GM23248 (cell line): ENCODE measurements at regions of chr12 and their contacts with region 1.

Region 1: GRCh38 chr12:14167005-14167628 is 185.7 kb upstream of the GRIN2B start:
- DNase-seq: peak; percentile 60
- H3K4me3 ChIP-seq: no peak overlapping the region
- H3K27ac ChIP-seq: no peak overlapping the region
- H3K4me1 ChIP-seq: no peaks in the 10 kb centered on the region
- H3K27me3 ChIP-seq: no peaks in the 10 kb centered on the region

Region 2: GRCh38 chr12:13864081-13864673 is 302.9 kb before region 1 on chr12:
- in situ Hi-C with region 1: loop called (anchors 10 kb)
- DNase-seq: peak; percentile 81
- H3K4me3 ChIP-seq: no peak overlapping the region
- H3K27ac ChIP-seq: no peak overlapping the region
- H3K4me1 ChIP-seq: no peaks in the 10 kb centered on the region
- H3K27me3 ChIP-seq: peaks cover 10% of the 10 kb centered on the region; the same call in 1 of the 2 replicates